Endothelial cell of umbilical vein (primary cell): ENCODE measurements at regions of chr12 and their contacts with region 1.

Region 1: GRCh38 chr12:51891843-51892242 is 3.9 kb downstream of the ANKRD33 start:
- DNase-seq: no peak
- H3K4me3 ChIP-seq: no peak overlapping the region
- H3K27ac ChIP-seq: no peak overlapping the region
- H3K4me1 ChIP-seq: peaks cover 35% of the 10 kb centered on the region
- H3K27me3 ChIP-seq: no peaks in the 10 kb centered on the region
- CTCF ChIP-seq: peak in 1 of 2 donors; percentile 23
- POLR2A ChIP-seq: no peak

Region 2: DNA sequence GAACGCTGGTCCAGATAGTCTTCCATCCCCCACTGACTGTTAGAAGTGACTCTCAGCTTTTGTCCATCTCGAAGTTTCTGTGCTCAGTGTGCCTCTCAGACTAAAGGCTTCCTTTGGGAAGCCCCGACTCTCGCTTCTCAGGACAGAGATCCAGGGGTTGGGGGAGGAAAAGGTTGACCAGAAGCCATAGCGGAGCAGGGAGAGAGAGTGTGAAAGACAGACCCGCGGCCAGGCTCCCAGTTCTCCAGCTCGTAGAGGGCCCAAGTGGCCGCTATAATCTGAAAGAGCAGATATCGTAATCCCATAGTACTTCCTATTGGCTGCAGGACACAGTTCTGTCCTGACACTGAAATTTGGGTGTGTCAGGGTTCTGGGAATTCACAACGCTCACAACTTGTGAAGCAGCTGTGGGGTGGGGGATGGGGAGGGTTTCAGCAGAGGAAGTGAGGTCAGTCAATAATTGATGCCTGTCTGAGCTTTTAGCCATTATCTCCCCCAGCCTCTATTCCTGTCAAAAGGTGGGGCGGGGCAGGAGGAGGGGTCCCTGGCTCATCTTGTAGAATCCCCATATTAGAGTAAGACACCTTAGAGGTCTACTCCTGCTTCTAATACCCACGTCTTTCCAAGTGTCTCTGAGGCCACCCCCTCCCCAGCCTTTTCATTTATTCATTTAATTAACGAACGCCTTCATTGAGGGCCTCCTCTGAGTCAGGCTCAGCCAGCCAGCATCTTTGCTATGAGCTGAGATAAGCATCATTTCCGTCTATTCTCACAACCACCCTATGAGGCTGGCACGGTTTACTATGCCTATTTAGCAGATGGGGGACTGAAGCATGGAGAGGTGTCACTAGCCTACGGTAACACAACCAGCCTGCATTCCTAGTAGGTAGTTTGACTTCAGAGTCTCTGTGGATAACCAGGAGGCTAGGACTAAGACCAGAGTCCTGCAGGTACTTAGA is 13.9 kb after region 1 on chr12:
- CTCF ChIA-PET with region 1: interaction called, 286 read pairs
- POLR2A ChIA-PET with region 1: interaction called, 18 read pairs
- dilution Hi-C with region 1: no loop called
- intact Hi-C with region 1: loop called (anchors 1 kb)
- DNase-seq: peak; percentile 90
- H3K4me3 ChIP-seq: peak overlapping the region in 2 of 3 experiments; percentile 10 to 92
- H3K27ac ChIP-seq: peak overlapping the region; percentile 99
- H3K4me1 ChIP-seq: peaks cover 66% of the 10 kb centered on the region
- H3K27me3 ChIP-seq: no peaks in the 10 kb centered on the region
- CTCF ChIP-seq: no peak
- POLR2A ChIP-seq: peak; percentile 48

Region 3: DNA sequence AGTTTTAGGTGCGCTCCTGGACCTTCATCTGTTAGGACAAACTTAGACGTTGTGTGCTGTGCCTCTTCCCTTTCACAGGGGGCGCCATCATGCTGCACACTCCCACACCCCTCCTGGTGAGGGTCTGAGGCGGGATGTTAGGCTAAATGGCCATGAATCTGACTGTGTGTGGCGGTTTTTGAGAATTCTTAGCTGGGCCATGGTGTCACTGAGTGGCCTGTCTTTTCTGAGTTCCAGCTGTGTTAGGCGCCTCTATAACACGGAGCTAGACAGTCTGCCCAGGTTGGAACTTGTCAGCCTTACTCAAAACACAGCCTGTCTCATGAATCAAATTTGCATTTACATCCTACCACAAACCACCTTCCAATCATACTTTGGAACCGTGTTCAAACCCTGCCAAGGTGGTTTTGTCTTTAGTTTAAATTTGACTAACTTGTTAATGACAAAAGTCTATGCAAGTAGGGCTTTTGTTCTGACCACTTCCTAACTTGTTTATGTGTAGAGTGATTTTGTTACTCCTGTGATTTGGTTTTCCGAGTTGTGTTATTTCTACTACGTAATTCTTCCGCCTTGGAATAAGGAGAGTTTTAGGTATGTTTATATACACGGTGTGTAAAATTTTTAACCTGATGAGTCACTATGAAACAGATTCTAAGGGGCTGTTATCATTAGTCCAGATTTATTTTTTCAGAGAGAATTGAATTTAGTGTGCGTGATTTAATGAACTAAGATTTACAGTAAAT is 79.2 kb after region 1 on chr12:
- CTCF ChIA-PET with region 1: interaction called, 10 read pairs
- POLR2A ChIA-PET with region 1: no interaction called
- dilution Hi-C with region 1: no loop called
- intact Hi-C with region 1: loop called (anchors 2 kb)
- DNase-seq: peak; percentile 89
- H3K4me3 ChIP-seq: peak overlapping the region in 1 of 3 experiments; percentile 3
- H3K27ac ChIP-seq: peak overlapping the region; percentile 98
- H3K4me1 ChIP-seq: peaks cover 70% of the 10 kb centered on the region
- H3K27me3 ChIP-seq: no peaks in the 10 kb centered on the region
- CTCF ChIP-seq: peak; percentile 82 to 85
- POLR2A ChIP-seq: no peak

Region 4: DNA sequence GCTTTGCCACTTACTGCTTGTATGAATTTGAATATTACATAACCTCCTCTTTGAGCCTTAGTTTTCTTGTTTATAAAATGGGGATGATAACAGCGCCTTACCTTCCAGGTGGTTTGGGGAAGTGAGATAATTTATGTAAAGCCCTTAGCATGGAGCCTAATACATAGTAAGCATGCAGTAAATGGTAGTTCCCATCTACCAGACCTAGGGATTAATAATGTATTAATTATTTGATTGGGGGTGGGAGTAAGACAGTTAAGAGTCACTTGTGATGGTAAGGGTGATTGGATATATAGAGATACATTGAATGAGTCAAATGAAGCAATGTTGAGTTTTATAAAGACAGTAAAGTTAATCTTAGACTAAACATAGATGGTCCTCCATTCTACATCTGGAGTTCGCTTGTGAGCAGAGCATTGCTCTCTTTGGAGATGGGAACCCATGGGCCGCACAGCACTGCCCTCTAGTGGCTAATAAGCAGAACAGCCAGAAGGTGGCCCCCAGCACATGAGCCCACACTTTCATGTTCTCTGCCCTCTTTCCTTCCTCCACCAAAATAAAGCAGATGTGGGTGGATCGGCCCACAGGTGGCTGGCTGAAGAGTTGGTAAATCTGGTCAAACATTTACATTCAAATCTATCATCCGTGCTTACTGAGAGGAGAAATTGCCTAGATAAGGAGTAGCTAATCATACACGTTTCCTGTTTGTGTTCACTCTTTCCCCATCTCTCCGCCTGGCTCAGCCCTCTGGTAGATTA is 88.4 kb after region 1 on chr12:
- CTCF ChIA-PET with region 1: interaction called, 60 read pairs
- POLR2A ChIA-PET with region 1: interaction called, 5 read pairs
- dilution Hi-C with region 1: no loop called
- intact Hi-C with region 1: loop called (anchors 1 kb)
- DNase-seq: peak; percentile 84
- H3K4me3 ChIP-seq: no peak overlapping the region
- H3K27ac ChIP-seq: no peak overlapping the region
- H3K4me1 ChIP-seq: peaks cover 36% of the 10 kb centered on the region
- H3K27me3 ChIP-seq: no peaks in the 10 kb centered on the region
- CTCF ChIP-seq: peak; percentile 90 to 97
- POLR2A ChIP-seq: no peak

Region 5: DNA sequence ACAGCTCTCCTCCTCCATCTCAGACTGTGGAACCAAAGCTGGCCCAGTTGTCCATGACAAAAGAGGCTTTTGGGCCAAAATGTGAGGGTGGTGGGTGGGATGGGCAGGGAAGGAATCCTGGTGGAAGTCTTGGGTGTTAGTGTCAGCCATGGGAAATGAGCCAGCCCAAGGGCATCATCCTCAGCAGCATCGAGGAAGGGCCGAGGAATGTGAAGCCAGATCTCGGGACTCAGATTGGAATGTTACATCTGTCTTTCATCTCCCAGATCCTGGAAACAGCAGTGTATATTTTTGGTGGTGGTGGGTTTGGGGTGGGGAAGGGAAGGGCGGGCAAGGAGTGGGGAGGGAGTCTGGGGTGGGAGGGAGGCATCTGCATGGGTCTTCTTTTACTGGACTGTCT is 103.1 kb after region 1 on chr12:
- CTCF ChIA-PET with region 1: interaction called, 11 read pairs
- POLR2A ChIA-PET with region 1: no interaction called
- dilution Hi-C with region 1: no loop called
- intact Hi-C with region 1: no loop called
- DNase-seq: no peak
- H3K4me3 ChIP-seq: no peak overlapping the region
- H3K27ac ChIP-seq: no peak overlapping the region
- H3K4me1 ChIP-seq: no peaks in the 10 kb centered on the region
- H3K27me3 ChIP-seq: no peaks in the 10 kb centered on the region
- CTCF ChIP-seq: no peak
- POLR2A ChIP-seq: no peak